ENCODE measurements at regions of chr3 and their contacts with region 1.

Region 1: DNA sequence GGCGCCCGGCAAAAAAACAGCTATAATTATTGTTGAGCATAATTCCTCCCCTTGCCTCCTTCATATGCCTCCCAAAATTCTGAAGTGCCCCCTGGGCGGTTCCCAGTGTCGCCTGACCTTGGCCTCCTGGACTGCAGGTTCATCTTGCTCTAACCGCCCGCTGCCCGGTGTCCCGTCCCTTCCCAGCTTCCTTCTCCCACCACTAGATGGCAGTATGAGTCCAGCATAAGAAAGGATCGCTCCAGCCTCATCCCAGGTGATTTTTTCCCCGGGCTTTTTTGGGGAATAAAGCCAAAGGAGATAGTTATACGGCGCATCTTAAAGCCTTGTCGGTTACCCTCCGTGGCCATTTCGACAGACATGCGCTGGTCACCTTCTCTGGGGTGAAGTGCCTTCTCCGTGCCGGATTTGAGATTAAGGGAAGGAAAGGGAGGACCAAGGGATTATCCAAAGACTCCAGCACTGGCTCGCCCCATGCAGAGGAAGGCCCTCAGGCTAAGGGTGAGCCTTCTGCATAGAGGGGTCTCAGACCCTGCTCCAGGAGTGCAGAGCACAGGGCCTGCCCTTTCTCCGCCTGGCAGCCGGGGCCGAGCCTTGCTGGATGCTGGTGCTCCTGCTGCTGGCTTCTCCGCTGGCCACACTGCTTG is 45.8 kb upstream of the TRA2B start:
- DNase-seq: peak; percentile 59
- ATAC-seq: peak; percentile 97
- H3K4me3 ChIP-seq: peak overlapping the region in 1 of 2 experiments; percentile 21; a peak in 1 of 4 replicates
- H3K27ac ChIP-seq: no peak overlapping the region
- H3K4me1 ChIP-seq: no peaks in the 10 kb centered on the region
- H3K27me3 ChIP-seq: no peaks in the 10 kb centered on the region
- CTCF ChIP-seq: peak; percentile 92

Region 2: DNA sequence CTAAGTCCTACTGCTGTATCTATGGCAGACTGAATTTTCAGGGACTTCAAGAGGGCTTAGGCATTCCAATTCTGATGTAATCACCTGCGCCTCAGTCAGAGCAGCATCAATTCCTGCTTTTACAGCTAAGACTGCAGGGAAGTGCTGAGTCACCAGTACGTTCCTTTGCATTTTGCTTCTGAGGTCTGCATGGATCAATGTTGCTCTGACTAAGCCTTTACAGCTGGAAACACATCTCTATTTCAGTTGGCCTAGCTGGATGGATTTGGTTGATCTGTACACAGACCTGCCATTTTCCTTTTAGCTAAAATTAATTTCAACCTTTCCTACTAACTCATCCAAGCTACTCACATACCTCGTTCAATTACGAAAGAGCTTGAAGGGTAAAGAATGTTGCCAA is 74.0 kb after region 1 on chr3:
- CTCF ChIA-PET with region 1: no interaction called
- POLR2A ChIA-PET with region 1: no interaction called
- in situ Hi-C with region 1: no loop called
- intact Hi-C with region 1: no loop called
- DNase-seq: no peak
- ATAC-seq: no peak
- H3K4me3 ChIP-seq: no peak overlapping the region
- H3K27ac ChIP-seq: no peak overlapping the region
- H3K4me1 ChIP-seq: no peaks in the 10 kb centered on the region
- H3K27me3 ChIP-seq: no peaks in the 10 kb centered on the region
- CTCF ChIP-seq: no peak

Region 3: DNA sequence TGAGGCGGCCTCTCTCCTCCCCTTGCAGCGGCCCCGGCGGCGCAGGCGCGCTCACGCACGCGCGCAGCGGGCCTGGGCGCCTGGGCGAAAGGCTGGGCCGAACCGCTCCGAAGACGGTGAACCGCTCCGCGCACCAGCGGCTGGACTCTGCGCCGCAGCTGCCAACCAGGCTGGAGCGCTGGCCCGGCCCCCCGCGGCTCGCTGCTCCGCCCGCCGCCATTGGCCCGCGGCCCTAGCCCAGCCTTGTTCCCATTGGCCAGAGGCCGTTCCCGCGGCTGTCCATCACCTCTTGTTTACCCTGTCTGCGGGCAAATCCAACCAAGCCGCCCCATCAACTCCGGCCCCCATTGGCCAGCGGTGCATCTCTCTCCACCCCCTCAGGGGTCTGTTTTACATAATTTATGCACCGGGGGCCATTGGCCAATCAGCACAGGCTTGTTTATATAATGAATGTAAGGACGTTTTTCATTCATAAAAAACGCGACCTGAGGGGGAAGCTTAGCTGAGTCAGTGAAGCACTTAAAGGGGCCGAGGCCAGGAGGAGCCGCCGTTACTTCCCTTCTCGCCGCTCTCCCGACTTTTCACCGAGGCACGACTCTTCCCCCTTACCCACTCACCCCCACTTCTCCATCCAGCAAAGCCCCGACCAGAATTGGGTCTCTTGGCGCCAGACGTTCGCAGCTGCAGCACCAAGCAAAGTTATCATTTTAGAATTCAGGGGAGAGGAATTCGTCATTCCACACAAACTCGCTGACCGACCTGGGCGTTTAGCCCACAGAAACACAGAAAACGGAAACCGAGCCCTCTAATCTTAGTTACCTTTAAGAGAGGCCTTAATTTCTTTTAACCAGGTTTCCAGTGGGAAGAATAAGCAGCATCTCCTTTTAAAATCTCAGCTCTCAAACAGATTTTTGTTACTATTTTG is 125.6 kb after region 1 on chr3 and contains the start of gene ETV5:
- CTCF ChIA-PET with region 1: no interaction called
- POLR2A ChIA-PET with region 1: no interaction called
- in situ Hi-C with region 1: no loop called
- intact Hi-C with region 1: loop called (anchors 5 kb)
- DNase-seq: peak; percentile 97
- ATAC-seq: peak; percentile 95
- H3K4me3 ChIP-seq: peak within 1 kb of the TSS; percentile 91 to 95
- H3K27ac ChIP-seq: peak within 1 kb of the TSS; percentile 81
- H3K4me1 ChIP-seq: peaks cover 28% of the 10 kb centered on the region
- H3K27me3 ChIP-seq: 0 out of 2 replicates have a peak, but pooled peaks cover 2% of the 10 kb centered on the region
- CTCF ChIP-seq: no peak
- total RNA-seq, gene ETV5: 79.3 TPM

Region 4: GRCh38 chr3:186121968-186122367 is 138.3 kb after region 1 on chr3:
- CTCF ChIA-PET with region 1: interaction called, 12 read pairs
- POLR2A ChIA-PET with region 1: no interaction called
- in situ Hi-C with region 1: no loop called
- intact Hi-C with region 1: no loop called
- DNase-seq: no peak
- ATAC-seq: no peak
- H3K4me3 ChIP-seq: no peak overlapping the region
- H3K27ac ChIP-seq: no peak overlapping the region
- H3K4me1 ChIP-seq: no peaks in the 10 kb centered on the region
- H3K27me3 ChIP-seq: peaks cover 22% of the 10 kb centered on the region
- CTCF ChIP-seq: no peak

Region 5: DNA sequence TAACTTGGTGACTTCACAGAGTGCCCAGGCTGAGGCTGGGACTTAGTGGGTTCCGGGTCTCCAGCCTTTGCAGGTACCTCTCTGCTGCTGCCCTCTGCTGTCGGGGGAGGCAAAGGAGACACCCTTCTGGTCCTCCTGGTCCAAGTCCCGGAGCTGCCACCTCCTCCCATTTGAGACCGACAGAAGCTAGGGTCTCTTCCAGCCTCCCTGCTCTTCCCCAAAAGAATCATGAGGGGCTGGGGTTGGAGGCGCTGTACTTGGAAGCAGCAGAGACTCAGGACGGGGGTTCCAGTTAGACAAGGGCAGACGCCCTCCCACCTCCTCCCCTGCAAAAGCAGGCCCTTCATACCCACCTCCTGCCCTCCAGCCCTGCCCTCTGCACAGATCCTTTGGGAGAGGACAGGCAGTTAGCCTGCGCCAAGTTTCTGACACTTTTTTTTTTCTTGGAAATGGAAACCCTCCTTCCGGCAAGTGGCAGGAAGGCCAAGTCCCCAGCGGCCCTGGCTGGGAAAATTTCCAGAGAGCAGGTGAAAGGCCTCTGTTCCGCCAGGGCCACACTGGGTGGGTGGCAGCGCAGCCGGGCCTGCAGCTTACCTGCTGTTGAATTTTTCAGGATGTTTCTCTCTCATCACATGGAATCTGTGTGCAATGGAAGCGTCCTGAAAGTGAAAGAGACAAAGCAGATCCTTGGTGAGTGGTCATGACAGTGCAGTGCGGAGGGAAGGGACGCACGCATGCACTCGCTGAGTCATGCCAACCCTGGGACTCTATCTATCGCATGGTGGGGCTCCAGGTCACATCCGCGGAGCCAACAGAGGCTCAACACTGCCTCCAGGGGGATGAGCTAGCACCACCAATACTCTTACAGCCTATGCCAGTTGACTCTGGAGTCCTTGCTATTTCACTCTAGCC is 258.5 kb after region 1 on chr3:
- CTCF ChIA-PET with region 1: interaction called, 7 read pairs
- POLR2A ChIA-PET with region 1: no interaction called
- in situ Hi-C with region 1: no loop called
- intact Hi-C with region 1: loop called (anchors 1 kb)
- DNase-seq: no peak
- ATAC-seq: peak; percentile 94
- H3K4me3 ChIP-seq: peak overlapping the region; percentile 5 to 15; a peak in 3 of 4 replicates
- H3K27ac ChIP-seq: no peak overlapping the region
- H3K4me1 ChIP-seq: peaks cover 6% of the 10 kb centered on the region; the same call in 1 of the 2 replicates
- H3K27me3 ChIP-seq: 0 out of 2 replicates have a peak, but pooled peaks cover 2% of the 10 kb centered on the region
- CTCF ChIP-seq: peak; percentile 82

Region 6: GRCh38 chr3:186259612-186260383 is 276.2 kb after region 1 on chr3:
- CTCF ChIA-PET with region 1: interaction called, 6 read pairs
- POLR2A ChIA-PET with region 1: no interaction called
- in situ Hi-C with region 1: no loop called
- intact Hi-C with region 1: loop called (anchors 5 kb)
- DNase-seq: no peak
- ATAC-seq: peak; percentile 99
- H3K4me3 ChIP-seq: no peak overlapping the region
- H3K27ac ChIP-seq: no peak overlapping the region
- H3K4me1 ChIP-seq: no peaks in the 10 kb centered on the region
- H3K27me3 ChIP-seq: peaks cover 2% of the 10 kb centered on the region; the same call in 1 of the 2 replicates
- CTCF ChIP-seq: peak; percentile 99

Region 7: DNA sequence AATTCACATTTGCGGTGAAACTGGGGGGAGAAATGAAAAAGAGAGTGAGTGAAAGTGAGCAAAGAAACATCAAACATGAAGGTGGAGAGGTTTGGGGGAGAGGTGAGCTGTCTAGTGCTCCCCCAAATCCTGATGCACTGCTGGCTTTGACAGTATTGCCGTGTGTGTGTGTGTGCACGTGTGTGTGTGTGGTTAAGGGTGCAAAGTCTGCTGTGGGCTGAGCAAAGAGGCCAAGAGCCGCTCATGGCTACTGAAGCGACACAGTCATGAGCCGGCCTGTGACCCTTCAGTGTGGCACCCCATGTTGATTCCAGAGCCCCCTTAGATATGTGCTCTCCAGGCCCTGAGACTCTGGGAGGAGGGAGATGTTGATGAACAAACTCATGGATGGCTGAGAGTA is 284.1 kb after region 1 on chr3:
- CTCF ChIA-PET with region 1: interaction called, 10 read pairs
- POLR2A ChIA-PET with region 1: no interaction called
- in situ Hi-C with region 1: no loop called
- intact Hi-C with region 1: no loop called
- DNase-seq: no peak
- ATAC-seq: no peak
- H3K4me3 ChIP-seq: no peak overlapping the region
- H3K27ac ChIP-seq: no peak overlapping the region
- H3K4me1 ChIP-seq: no peaks in the 10 kb centered on the region
- H3K27me3 ChIP-seq: peaks cover 9% of the 10 kb centered on the region; the same call in 1 of the 2 replicates
- CTCF ChIP-seq: no peak

Region 8: GRCh38 chr3:186540221-186540834 is 556.7 kb after region 1 on chr3:
- CTCF ChIA-PET with region 1: interaction called, 5 read pairs
- POLR2A ChIA-PET with region 1: no interaction called
- in situ Hi-C with region 1: no loop called
- intact Hi-C with region 1: loop called (anchors 2 kb)
- DNase-seq: peak; percentile 72
- ATAC-seq: peak; percentile 93
- H3K4me3 ChIP-seq: no peak overlapping the region
- H3K27ac ChIP-seq: no peak overlapping the region
- H3K4me1 ChIP-seq: no peaks in the 10 kb centered on the region
- H3K27me3 ChIP-seq: no peaks in the 10 kb centered on the region
- CTCF ChIP-seq: peak; percentile 83

Measured in Panc1 (cell line).